IMR-90 (cell line): ENCODE measurements at regions of chr3 and their contacts with region 1.

Region 1: DNA sequence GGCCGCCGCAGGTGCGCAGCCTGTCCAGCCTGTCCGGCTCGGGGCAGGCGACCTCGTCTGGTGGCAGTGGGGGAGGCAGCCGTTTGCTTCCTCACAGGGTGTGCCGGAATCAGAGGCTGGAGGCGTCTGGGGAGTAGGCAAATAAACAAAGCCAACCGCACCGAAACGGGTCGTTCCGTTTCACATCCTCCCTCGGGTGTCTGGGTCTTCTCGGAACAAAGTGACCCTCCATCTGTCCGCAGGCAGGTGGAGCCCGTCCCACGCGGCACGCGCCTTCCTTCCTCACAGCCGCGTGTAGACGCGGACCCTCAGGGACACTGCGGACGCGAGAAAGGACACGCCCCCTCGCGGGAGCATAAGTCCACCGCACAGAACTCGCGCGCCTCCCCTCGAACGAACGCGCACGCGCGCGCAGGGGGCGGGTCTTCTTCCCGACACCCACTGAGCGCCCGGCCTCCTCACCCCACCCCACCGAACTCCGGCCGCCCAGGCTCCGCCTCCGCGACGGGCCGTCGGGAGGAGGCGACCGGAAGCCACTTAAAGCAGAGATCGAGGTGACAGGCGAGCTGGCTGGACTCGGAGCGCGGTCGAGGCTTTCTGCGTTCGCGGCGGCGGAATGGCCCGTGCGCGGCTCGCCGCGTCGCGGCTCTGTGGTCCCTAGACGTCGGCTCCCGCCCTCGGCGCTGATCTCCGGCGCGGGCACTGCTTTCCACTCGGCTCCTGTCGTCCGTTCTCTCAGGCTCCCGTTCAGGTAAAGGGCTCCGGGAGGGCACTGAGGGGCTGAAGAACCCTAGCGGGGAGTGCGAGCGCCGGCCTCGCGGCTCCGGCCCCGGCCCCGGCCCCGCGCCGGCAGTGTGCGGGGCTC is at the start of gene TIPARP:
- DNase-seq: peak; percentile 96
- ATAC-seq: peak; percentile 94
- H3K4me3 ChIP-seq: peak within 1 kb of the TSS; percentile 71
- H3K27ac ChIP-seq: peak within 1 kb of the TSS; percentile 62
- H3K4me1 ChIP-seq: peaks cover 7% of the 10 kb centered on the region
- H3K27me3 ChIP-seq: no peaks in the 10 kb centered on the region
- CTCF ChIP-seq: peak; percentile 58
- POLR2A ChIP-seq: peak; percentile 99
- RAD21 ChIP-seq: peak; percentile 59
- total RNA-seq, gene TIPARP: 70.8 and 76.4 TPM in 2 replicates

Region 2: DNA sequence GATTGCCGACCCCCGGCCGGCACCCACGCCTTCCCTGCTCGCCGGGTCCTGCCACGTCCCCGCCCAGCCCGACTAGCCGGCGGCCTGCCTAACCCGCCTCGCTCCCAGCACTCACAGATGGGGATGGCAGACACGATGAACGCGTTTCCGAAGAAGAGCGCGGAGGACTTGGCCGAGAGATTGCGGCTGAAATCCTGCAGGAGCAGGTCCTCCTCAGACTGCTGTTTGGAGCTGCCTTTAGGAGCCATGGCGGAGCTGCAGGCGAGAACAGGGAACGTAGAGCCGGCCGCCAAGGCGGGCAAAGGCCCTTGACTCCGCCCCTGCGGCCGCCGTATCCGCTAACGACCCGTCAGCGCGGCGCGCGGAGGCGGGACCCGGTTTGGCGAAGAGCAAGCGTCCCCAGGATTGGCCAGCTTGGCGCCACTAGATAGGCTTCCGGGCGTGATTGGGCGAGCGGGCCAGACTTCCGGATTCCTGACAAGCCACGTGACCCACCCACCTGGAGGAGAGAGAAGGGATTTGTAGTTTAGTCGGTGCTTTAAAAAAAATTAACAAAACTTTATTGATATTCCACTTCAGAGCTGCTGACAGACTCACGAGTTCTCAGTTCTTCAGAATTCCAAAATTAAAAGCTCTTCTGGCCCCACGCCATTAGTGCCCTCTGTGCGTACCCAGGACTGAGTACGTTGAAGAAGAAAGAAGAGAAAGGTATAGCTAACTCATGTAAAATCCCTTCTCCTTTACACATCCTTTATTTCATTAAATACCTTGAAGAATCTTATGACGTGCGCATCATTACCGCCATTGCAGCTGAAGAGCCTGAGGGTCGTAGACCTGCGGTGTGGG is 119.2 kb before region 1 on chr3 and contains the start of gene SSR3:
- CTCF ChIA-PET with region 1: interaction called, 5 read pairs
- POLR2A ChIA-PET with region 1: interaction called, 6 read pairs
- dilution Hi-C with region 1: no loop called
- in situ Hi-C with region 1: loop called (anchors 10 kb)
- intact Hi-C with region 1: loop called (anchors 1 kb)
- DNase-seq: peak; percentile 100
- ATAC-seq: peak; percentile 97
- H3K4me3 ChIP-seq: peak within 1 kb of the TSS; percentile 76
- H3K27ac ChIP-seq: peak within 1 kb of the TSS; percentile 100
- H3K4me1 ChIP-seq: peaks cover 9% of the 10 kb centered on the region
- H3K27me3 ChIP-seq: no peaks in the 10 kb centered on the region
- CTCF ChIP-seq: no peak
- POLR2A ChIP-seq: peak; percentile 97
- RAD21 ChIP-seq: 0 out of 2 replicates have a peak, but pooled peaks have one; percentile 5
- total RNA-seq, gene SSR3: 606 and 608 TPM in 2 replicates

Region 3: DNA sequence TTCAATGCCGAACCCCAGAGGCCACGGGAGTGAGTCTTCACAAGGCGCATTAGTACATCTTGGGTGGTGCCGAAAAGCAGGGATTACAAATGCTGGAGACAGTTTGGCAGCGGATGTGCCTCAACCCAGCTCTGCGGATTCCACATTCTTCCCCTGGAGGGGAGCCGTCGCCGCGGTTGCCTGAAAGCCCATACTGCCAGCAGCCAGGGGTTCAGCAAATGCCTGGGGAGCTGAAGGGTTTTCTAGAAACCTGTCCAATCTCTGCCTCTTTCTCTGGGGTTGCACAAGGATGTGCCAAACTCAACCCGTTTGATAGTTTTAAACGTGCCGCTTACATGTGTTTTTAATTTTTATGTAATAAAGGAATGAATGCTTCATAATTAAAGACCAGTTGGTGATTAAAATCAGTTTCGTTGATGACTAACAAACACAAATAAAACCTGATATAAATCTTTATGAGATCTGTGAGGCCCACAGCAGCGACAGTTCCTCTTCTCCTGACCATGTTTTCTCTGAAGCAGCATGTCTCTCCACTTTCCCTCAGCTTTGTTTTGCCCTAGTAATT is 77.3 kb after region 1 on chr3:
- CTCF ChIA-PET with region 1: no interaction called
- POLR2A ChIA-PET with region 1: no interaction called
- dilution Hi-C with region 1: no loop called
- in situ Hi-C with region 1: no loop called
- intact Hi-C with region 1: loop called (anchors 5 kb)
- DNase-seq: peak; percentile 79
- ATAC-seq: peak; percentile 77
- H3K4me3 ChIP-seq: no peak overlapping the region; the same call in 1 of the 2 replicates
- H3K27ac ChIP-seq: peak overlapping the region; percentile 92
- H3K4me1 ChIP-seq: peaks cover 14% of the 10 kb centered on the region
- H3K27me3 ChIP-seq: no peaks in the 10 kb centered on the region
- CTCF ChIP-seq: peak; percentile 18; the same call in 1 of the 2 replicates
- POLR2A ChIP-seq: peak; percentile 33; the same call in 1 of the 2 replicates
- RAD21 ChIP-seq: peak; percentile 46

Region 4: DNA sequence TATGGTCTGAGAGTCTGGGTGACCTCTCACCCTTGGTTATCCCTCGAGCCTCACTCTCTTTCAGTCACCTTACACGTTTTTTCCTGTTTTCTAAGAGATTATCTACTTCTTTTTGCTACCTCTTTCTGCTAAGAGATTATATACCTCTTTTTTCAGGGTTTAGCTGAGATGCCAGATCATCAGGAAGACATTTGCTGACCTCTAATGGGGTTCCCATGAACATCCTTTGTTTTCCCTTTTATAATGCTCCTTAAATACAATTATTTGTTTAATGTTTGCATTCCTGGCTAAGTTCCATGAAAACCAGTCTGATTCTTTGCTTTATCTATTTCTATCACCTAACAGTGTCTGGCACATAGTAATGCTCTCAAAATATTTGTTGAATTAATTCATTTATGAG is 191.5 kb after region 1 on chr3:
- CTCF ChIA-PET with region 1: interaction called, 3 read pairs
- POLR2A ChIA-PET with region 1: no interaction called
- dilution Hi-C with region 1: no loop called
- in situ Hi-C with region 1: no loop called
- intact Hi-C with region 1: loop called (anchors 5 kb)
- DNase-seq: peak; percentile 40
- ATAC-seq: no peak
- H3K4me3 ChIP-seq: no peak overlapping the region
- H3K27ac ChIP-seq: no peak overlapping the region
- H3K4me1 ChIP-seq: no peaks in the 10 kb centered on the region
- H3K27me3 ChIP-seq: no peaks in the 10 kb centered on the region
- CTCF ChIP-seq: peak; percentile 40; the same call in 1 of the 2 replicates
- POLR2A ChIP-seq: no peak
- RAD21 ChIP-seq: peak; percentile 50

Region 5: DNA sequence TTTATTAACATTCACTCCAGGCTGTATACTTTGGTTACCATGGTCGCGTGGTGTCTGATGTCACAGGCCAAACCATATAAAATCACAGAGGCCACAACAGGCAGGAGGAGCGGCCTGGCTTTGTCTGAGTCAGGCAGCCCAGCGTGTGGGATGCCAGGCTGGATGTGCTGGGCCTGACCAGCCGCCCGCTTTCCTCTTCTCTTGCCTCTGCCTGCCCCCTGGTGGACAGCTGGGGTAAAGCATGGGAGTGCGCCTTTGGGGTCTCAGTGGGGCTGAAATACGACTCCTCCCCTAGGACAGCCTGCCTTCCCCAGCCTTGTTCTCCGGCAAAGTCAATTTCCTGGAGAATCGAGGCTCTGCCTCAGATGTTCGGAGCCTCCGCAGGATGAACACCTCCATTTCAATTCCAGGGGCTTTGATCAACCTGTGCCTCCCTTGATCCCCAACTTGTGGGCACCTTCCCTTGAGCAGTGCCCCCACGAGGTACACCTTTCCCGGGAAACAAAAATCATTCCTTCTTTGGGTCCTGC is 407.5 kb after region 1 on chr3:
- CTCF ChIA-PET with region 1: interaction called, 6 read pairs
- POLR2A ChIA-PET with region 1: no interaction called
- dilution Hi-C with region 1: no loop called
- in situ Hi-C with region 1: no loop called
- intact Hi-C with region 1: loop called (anchors 1 kb)
- DNase-seq: peak; percentile 94
- ATAC-seq: peak; percentile 97
- H3K4me3 ChIP-seq: no peak overlapping the region
- H3K27ac ChIP-seq: no peak overlapping the region
- H3K4me1 ChIP-seq: peaks cover 15% of the 10 kb centered on the region
- H3K27me3 ChIP-seq: no peaks in the 10 kb centered on the region
- CTCF ChIP-seq: peak; percentile 96
- POLR2A ChIP-seq: peak; percentile 82
- RAD21 ChIP-seq: peak; percentile 98